Heart left ventricle (tissue), 16 donors: ENCODE measurements at regions of chr4 and their contacts with region 1.

Region 1: GRCh38 chr4:154559494-154560418 is 3.1 kb upstream of the FGB start:
- DNase-seq: no peak
- ATAC-seq: no peak
- H3K4me3 ChIP-seq: no peak overlapping the region
- H3K27ac ChIP-seq: no peak overlapping the region
- H3K4me1 ChIP-seq: no peaks in the 10 kb centered on the region
- H3K27me3 ChIP-seq: no peaks in the 10 kb centered on the region
- CTCF ChIP-seq: peak in 7 of 12 donors; percentile 4 to 40 (median 31)
- POLR2A ChIP-seq: no peak

Region 2: GRCh38 chr4:154491341-154492271 is 68.2 kb before region 1 on chr4 and contains the start of gene DCHS2:
- intact Hi-C with region 1: no loop called
- DNase-seq: peak in 3 of 5 donors; percentile 19 to 66 (median 32)
- ATAC-seq: peak; percentile 29 to 70 (median 46)
- H3K4me3 ChIP-seq: peak within 1 kb of the TSS in 11 of 12 donors; percentile 12 to 50 (median 38)
- H3K27ac ChIP-seq: peak within 1 kb of the TSS in 1 of 12 donors; percentile 63
- H3K4me1 ChIP-seq: peaks cover 0 to 24% (median 7%) of the 10 kb centered on the region in 12 donors
- H3K27me3 ChIP-seq: peaks cover 14 to 70% (median 45%) of the 10 kb centered on the region in 9 donors
- CTCF ChIP-seq: no peak
- POLR2A ChIP-seq: no peak
- total RNA-seq, gene DCHS2: 0.10 to 0.49 (median 0.16) TPM in 5 of 9 donors, not detected in the others

Region 3: GRCh38 chr4:154618708-154619315 is 59.1 kb after region 1 on chr4:
- intact Hi-C with region 1: loop called in 5 of 10 experiments (anchors 5 kb)
- DNase-seq: peak in 1 of 5 donors; percentile 29
- ATAC-seq: no peak
- H3K4me3 ChIP-seq: no peak overlapping the region
- H3K27ac ChIP-seq: no peak overlapping the region
- H3K4me1 ChIP-seq: peaks cover 0 to 9% (median 0%) of the 10 kb centered on the region in 12 donors
- H3K27me3 ChIP-seq: no peaks in the 10 kb centered on the region
- CTCF ChIP-seq: peak; percentile 20 to 61 (median 45)
- POLR2A ChIP-seq: no peak

Region 4: GRCh38 chr4:154760895-154761294 is 201.1 kb after region 1 on chr4:
- intact Hi-C with region 1: loop called in 1 of 10 experiments (anchors 10 kb)
- DNase-seq: no peak
- ATAC-seq: no peak
- H3K4me3 ChIP-seq: no peak overlapping the region
- H3K27ac ChIP-seq: no peak overlapping the region
- H3K4me1 ChIP-seq: no peaks in the 10 kb centered on the region
- H3K27me3 ChIP-seq: peaks cover 0 to 7% (median 0%) of the 10 kb centered on the region in 9 donors
- CTCF ChIP-seq: no peak
- POLR2A ChIP-seq: no peak